AG04449 (cell line): ENCODE measurements at regions of chr1 and their contacts with region 1.

Region 1: GRCh38 chr1:39609618-39610331 is 29.7 kb downstream of the HEYL start:
- DNase-seq: no peak
- H3K4me3 ChIP-seq: no peak overlapping the region
- CTCF ChIP-seq: peak; percentile 83

Region 2: DNA sequence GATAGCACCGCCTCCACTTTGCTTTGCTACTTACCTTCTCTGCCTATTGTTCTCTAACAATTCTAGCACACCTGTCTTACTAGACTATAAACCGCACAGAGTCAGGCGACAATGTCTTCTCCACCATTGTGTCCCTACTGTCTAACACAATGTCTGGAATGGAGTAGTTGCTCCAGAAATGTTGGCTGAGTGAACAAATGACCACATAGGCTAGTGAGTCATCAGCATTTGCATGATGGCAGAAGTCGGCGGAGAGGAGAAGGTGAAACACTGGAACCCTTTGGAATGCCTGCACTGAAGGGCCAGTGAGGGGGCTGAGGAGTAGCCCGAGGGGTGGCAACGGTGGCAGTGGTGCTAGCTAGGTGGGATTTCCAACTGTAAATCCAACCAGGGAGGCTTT is 19.2 kb before region 1 on chr1:
- CTCF ChIA-PET with region 1: interaction called, 43 read pairs
- POLR2A ChIA-PET with region 1: interaction called, 3 read pairs
- DNase-seq: no peak
- H3K4me3 ChIP-seq: no peak overlapping the region
- CTCF ChIP-seq: no peak

Region 3: GRCh38 chr1:39625462-39626273 is 15.9 kb after region 1 on chr1:
- CTCF ChIA-PET with region 1: interaction called, 102 read pairs
- POLR2A ChIA-PET with region 1: no interaction called
- DNase-seq: no peak
- H3K4me3 ChIP-seq: no peak overlapping the region
- CTCF ChIP-seq: no peak

Region 4: GRCh38 chr1:39653546-39654031 is 43.8 kb after region 1 on chr1:
- CTCF ChIA-PET with region 1: interaction called, 670 read pairs
- POLR2A ChIA-PET with region 1: interaction called, 5 read pairs
- DNase-seq: no peak
- H3K4me3 ChIP-seq: no peak overlapping the region
- CTCF ChIP-seq: peak; percentile 87

Region 5: DNA sequence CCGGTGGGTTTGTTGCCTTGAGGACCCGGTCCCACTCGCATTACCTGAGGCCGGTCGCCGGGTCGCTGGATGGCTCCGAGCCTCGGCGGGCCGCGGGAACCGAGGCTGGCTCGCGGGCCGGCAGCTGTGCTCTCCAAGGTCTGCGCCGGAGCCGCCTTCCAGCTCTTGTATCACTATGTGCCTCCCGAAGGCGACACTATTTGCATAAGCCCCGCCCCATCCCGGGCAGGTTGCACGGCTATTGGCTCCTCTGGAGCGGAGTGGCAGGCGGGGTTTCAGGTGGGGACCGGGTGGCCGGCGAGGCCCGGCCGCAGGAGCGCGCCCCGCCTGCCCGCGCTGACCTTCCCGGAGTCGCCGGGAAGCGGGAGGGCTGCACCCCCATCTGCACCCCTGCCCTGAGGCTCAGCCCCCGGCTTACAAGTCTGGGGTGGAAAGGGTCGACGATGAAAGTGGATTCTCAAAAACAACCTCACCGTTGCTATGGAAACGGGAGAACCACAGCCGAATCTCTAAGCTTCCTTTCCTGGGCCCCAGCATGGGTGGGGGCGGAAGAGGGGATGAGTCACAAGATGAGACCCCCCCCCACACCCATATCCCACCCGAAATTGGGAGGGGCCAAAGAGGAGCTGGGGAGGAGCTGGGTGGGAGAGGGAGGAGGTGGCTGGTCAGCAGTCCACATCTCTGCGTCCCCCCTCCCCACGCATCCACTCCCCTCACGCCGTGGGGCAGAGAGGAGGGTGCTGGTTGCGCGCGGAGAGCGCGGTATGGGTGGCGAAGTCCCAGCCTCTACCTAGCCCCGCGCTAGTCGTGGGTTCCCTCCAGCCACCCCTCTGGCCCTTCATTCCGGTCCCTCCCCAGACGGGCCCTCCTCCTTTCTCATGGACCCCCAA is 81.7 kb after region 1 on chr1 and contains the start of gene HPCAL4:
- CTCF ChIA-PET with region 1: interaction called, 18 read pairs
- POLR2A ChIA-PET with region 1: no interaction called
- DNase-seq: no peak
- H3K4me3 ChIP-seq: peak within 1 kb of the TSS; percentile 28
- CTCF ChIP-seq: no peak

Region 6: DNA sequence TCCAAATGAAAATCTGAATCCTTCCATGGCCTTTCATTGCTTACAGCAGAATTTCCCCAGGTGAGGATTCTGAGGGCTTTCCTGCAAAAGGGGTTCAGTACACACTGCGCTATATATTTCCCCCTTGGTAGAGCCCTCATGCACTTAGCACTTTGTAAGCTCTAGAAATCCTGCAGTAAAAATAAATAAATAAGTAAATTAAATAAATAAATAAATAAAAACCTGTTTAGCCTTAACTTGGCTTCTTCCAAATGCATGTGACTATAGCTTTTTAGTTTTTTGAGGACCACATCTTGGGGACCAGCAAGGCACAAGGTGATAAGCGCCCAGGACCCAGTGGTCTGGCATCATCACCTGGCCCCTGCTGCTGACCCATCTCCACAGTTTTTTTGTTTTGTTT is 182.1 kb after region 1 on chr1:
- CTCF ChIA-PET with region 1: no interaction called
- POLR2A ChIA-PET with region 1: no interaction called
- DNase-seq: no peak
- H3K4me3 ChIP-seq: no peak overlapping the region
- CTCF ChIP-seq: no peak